B cell (primary cell): ENCODE measurements at regions of chr7 and their contacts with region 1.

Region 1: GRCh38 chr7:39948956-39949928 is 814 bp upstream of the CDK13 start:
- DNase-seq: peak; percentile 99
- ATAC-seq: peak; percentile 70
- H3K4me3 ChIP-seq: peak overlapping the region; percentile 77 to 98 (median 91)
- H3K4me3 Mint-ChIP-seq: peak overlapping the region; percentile 94
- H3K27ac ChIP-seq: peak overlapping the region; percentile 98
- H3K27ac Mint-ChIP-seq: peak overlapping the region; percentile 99
- H3K4me1 ChIP-seq: peaks cover 18 to 26% of the 10 kb centered on the region in 2 donors
- H3K4me1 Mint-ChIP-seq: peaks cover 38% of the 10 kb centered on the region
- H3K27me3 ChIP-seq: no peaks in the 10 kb centered on the region
- H3K27me3 Mint-ChIP-seq: no peaks in the 10 kb centered on the region
- CTCF ChIP-seq: no peak

Region 2: GRCh38 chr7:38908759-38909335 is 1040.4 kb before region 1 on chr7 and contains the start of gene VPS41:
- CTCF ChIA-PET with region 1: no interaction called
- POLR2A ChIA-PET with region 1: no interaction called
- intact Hi-C with region 1: loop called (anchors 5 kb)
- DNase-seq: peak; percentile 88
- ATAC-seq: peak; percentile 96
- H3K4me3 ChIP-seq: peak within 1 kb of the TSS; percentile 77 to 95 (median 87)
- H3K4me3 Mint-ChIP-seq: peak within 1 kb of the TSS; percentile 94
- H3K27ac ChIP-seq: peak within 1 kb of the TSS; percentile 32 to 76
- H3K27ac Mint-ChIP-seq: peak within 1 kb of the TSS; percentile 92
- H3K4me1 ChIP-seq: peaks cover 23 to 30% of the 10 kb centered on the region in 2 donors
- H3K4me1 Mint-ChIP-seq: peaks cover 46% of the 10 kb centered on the region
- H3K27me3 ChIP-seq: no peaks in the 10 kb centered on the region
- H3K27me3 Mint-ChIP-seq: no peaks in the 10 kb centered on the region
- CTCF ChIP-seq: no peak
- total RNA-seq, gene VPS41: 112 and 114 TPM in 2 replicates

Region 3: GRCh38 chr7:39299695-39300094 is 649.5 kb before region 1 on chr7:
- CTCF ChIA-PET with region 1: no interaction called
- POLR2A ChIA-PET with region 1: no interaction called
- intact Hi-C with region 1: no loop called
- DNase-seq: no peak
- ATAC-seq: no peak
- H3K4me3 ChIP-seq: no peak overlapping the region
- H3K4me3 Mint-ChIP-seq: no peak overlapping the region
- H3K27ac ChIP-seq: no peak overlapping the region
- H3K27ac Mint-ChIP-seq: no peak overlapping the region
- H3K4me1 ChIP-seq: no peaks in the 10 kb centered on the region
- H3K4me1 Mint-ChIP-seq: no peaks in the 10 kb centered on the region
- H3K27me3 ChIP-seq: no peaks in the 10 kb centered on the region
- H3K27me3 Mint-ChIP-seq: peaks cover 13% of the 10 kb centered on the region
- CTCF ChIP-seq: no peak

Region 4: DNA sequence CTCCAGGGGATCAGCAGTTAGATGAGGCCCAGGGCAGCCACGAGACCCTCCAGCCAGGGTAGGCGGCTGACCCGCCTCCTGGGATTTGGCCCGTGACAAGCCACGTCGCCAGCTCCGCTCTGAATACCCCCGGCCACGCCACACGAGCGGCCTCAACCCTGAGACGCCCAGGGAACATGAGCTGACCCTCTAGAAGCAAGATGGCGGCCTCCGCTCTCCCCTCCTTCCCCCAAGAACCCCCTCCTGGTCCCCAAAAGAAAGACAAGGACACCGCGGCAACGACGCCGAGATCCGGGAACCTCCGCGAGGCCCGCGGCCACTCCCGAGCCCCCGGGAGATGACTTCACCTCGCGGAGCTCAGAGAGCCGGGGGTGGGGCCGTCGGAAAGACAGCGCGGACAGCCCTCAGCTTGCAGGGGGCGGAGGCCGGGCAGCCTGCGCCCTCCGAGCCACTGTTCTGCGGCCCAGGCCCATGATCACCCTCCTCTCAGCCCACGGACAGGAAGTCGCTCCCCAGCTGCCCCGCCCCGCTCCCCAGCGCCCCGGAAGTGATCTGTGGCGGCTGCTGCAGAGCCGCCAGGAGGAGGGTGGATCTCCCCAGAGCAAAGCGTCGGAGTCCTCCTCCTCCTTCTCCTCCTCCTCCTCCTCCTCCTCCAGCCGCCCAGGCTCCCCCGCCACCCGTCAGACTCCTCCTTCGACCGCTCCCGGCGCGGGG is 326.1 kb before region 1 on chr7 and contains the start of gene RALA:
- CTCF ChIA-PET with region 1: no interaction called
- POLR2A ChIA-PET with region 1: no interaction called
- intact Hi-C with region 1: loop called (anchors 1 kb)
- DNase-seq: peak; percentile 90
- ATAC-seq: peak; percentile 90
- H3K4me3 ChIP-seq: peak within 1 kb of the TSS; percentile 82 to 97 (median 84)
- H3K4me3 Mint-ChIP-seq: peak within 1 kb of the TSS; percentile 95
- H3K27ac ChIP-seq: peak within 1 kb of the TSS; percentile 86 to 93
- H3K27ac Mint-ChIP-seq: peak within 1 kb of the TSS; percentile 92
- H3K4me1 ChIP-seq: peaks cover 24 to 26% of the 10 kb centered on the region in 2 donors
- H3K4me1 Mint-ChIP-seq: peaks cover 53% of the 10 kb centered on the region
- H3K27me3 ChIP-seq: no peaks in the 10 kb centered on the region
- H3K27me3 Mint-ChIP-seq: no peaks in the 10 kb centered on the region
- CTCF ChIP-seq: no peak
- total RNA-seq, gene RALA: 29.8 and 31.0 TPM in 2 replicates

Region 5: DNA sequence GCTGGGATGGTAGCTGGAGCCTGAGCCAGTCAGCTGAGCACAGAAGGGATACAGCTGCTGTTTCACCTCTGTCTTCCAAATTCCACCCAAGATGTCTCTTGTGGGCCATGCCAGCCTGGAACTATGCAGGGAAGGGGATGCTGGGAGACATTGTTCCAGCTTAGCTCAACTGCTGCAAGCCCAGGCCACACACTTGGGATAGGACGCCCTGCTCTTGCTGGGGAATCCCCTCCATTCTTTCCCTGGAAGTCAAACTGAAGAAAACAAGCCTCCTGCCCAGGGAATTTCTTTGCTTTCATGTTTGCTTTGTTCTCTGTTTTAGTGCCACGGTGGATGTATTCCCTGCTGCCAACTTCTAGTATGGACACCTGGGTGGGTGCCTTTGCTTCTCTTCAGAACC is 54.3 kb before region 1 on chr7:
- CTCF ChIA-PET with region 1: interaction called, 46 read pairs
- POLR2A ChIA-PET with region 1: no interaction called
- intact Hi-C with region 1: loop called (anchors 1 kb)
- DNase-seq: no peak
- ATAC-seq: no peak
- H3K4me3 ChIP-seq: no peak overlapping the region
- H3K4me3 Mint-ChIP-seq: no peak overlapping the region
- H3K27ac ChIP-seq: no peak overlapping the region
- H3K27ac Mint-ChIP-seq: no peak overlapping the region
- H3K4me1 ChIP-seq: peaks cover 0 to 3% of the 10 kb centered on the region in 2 donors
- H3K4me1 Mint-ChIP-seq: peaks cover 2% of the 10 kb centered on the region
- H3K27me3 ChIP-seq: peaks cover 0 to 4% (median 0%) of the 10 kb centered on the region in 4 experiments
- H3K27me3 Mint-ChIP-seq: peaks cover 20% of the 10 kb centered on the region
- CTCF ChIP-seq: no peak

Region 6: GRCh38 chr7:40015790-40016296 is 66.6 kb after region 1 on chr7:
- CTCF ChIA-PET with region 1: interaction called, 5 read pairs
- POLR2A ChIA-PET with region 1: no interaction called
- intact Hi-C with region 1: loop called (anchors 5 kb)
- DNase-seq: peak; percentile 56
- ATAC-seq: peak; percentile 86
- H3K4me3 ChIP-seq: no peak overlapping the region
- H3K4me3 Mint-ChIP-seq: no peak overlapping the region
- H3K27ac ChIP-seq: peak overlapping the region in 1 of 2 donors; percentile 63
- H3K27ac Mint-ChIP-seq: peak overlapping the region; percentile 15
- H3K4me1 ChIP-seq: peaks cover 8 to 12% of the 10 kb centered on the region in 2 donors
- H3K4me1 Mint-ChIP-seq: peaks cover 16% of the 10 kb centered on the region
- H3K27me3 ChIP-seq: no peaks in the 10 kb centered on the region
- H3K27me3 Mint-ChIP-seq: no peaks in the 10 kb centered on the region
- CTCF ChIP-seq: no peak

Region 7: GRCh38 chr7:40134428-40135316 is 185.4 kb after region 1 on chr7 and contains the starts of genes MPLKIP and SUGCT:
- CTCF ChIA-PET with region 1: interaction called, 5 read pairs
- POLR2A ChIA-PET with region 1: interaction called, 8 read pairs
- intact Hi-C with region 1: loop called (anchors 1 kb)
- DNase-seq: peak; percentile 97
- ATAC-seq: peak; percentile 91
- H3K4me3 ChIP-seq: peak within 1 kb of the TSS; percentile 87 to 95 (median 94)
- H3K4me3 Mint-ChIP-seq: peak within 1 kb of the TSS; percentile 95
- H3K27ac ChIP-seq: peak within 1 kb of the TSS; percentile 84 to 91
- H3K27ac Mint-ChIP-seq: peak within 1 kb of the TSS; percentile 98
- H3K4me1 ChIP-seq: peaks cover 18 to 22% of the 10 kb centered on the region in 2 donors
- H3K4me1 Mint-ChIP-seq: peaks cover 30% of the 10 kb centered on the region
- H3K27me3 ChIP-seq: peaks cover 0 to 3% (median 0%) of the 10 kb centered on the region in 4 experiments
- H3K27me3 Mint-ChIP-seq: peaks cover 3% of the 10 kb centered on the region
- CTCF ChIP-seq: peak; percentile 99
- total RNA-seq, gene MPLKIP: 31.4 and 34.1 TPM in 2 replicates
- total RNA-seq, gene SUGCT: 0.86 and 2.6 TPM in 2 replicates